ENCODE measurements at regions of chr6 and their contacts with region 1.

Region 1: GRCh38 chr6:135586841-135587240 is 89.3 kb upstream of the AHI1 start:
- DNase-seq: peak; percentile 89
- H3K4me3 Mint-ChIP-seq: peak overlapping the region; percentile 34
- H3K27ac Mint-ChIP-seq: peak overlapping the region; percentile 97
- H3K4me1 Mint-ChIP-seq: peaks cover 70% of the 10 kb centered on the region
- H3K27me3 Mint-ChIP-seq: no peaks in the 10 kb centered on the region

Region 2: GRCh38 chr6:135568366-135568765 is 18.5 kb before region 1 on chr6:
- intact Hi-C with region 1: loop called (anchors 1 kb)
- DNase-seq: peak; percentile 90
- H3K4me3 Mint-ChIP-seq: peak overlapping the region; percentile 64
- H3K27ac Mint-ChIP-seq: peak overlapping the region; percentile 92
- H3K4me1 Mint-ChIP-seq: peaks cover 62% of the 10 kb centered on the region
- H3K27me3 Mint-ChIP-seq: no peaks in the 10 kb centered on the region

Region 3: DNA sequence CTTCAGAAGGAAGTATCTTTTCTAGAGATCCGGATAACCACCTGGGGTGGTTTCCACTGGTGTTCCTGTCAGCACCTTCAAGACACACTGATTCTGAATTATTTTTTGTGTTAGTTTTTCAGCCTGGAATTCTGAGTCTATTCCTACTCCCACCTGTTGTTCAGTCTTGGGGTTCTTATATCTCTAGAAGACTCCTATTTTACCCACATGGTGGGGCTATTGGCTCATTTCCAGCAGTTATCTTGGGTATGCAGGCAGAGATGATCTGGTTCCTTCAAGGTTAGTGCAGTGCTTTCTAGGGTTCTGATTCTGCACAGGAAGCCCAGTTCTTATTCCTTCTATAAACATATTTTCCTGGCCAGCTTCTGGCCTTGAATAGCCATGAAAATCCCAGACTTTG is 89.0 kb after region 1 on chr6:
- intact Hi-C with region 1: no loop called
- DNase-seq: peak; percentile 85
- H3K4me3 Mint-ChIP-seq: peak overlapping the region; percentile 32
- H3K27ac Mint-ChIP-seq: peak overlapping the region; percentile 74
- H3K4me1 Mint-ChIP-seq: peaks cover 39% of the 10 kb centered on the region
- H3K27me3 Mint-ChIP-seq: no peaks in the 10 kb centered on the region

Measured in activated CD4-positive, alpha-beta T cell treated with anti-CD3 and anti-CD28 coated beads, Interleukin-2, amount 10 ng/mL, durations not matched to agents 24 days and 14 days (primary cell).